Activated T-helper 2 cell treated with anti-CD3 and anti-CD28 coated beads, Interferon-gamma antibody, Interleukin-2, Interleukin-4, amounts not matched to agents 10 μg/mL and 5 μg/mL and 100 μg/mL, durations not matched to agents 14 hours and 24 hours and 36 hours (primary cell): ENCODE measurements at regions of chr19 and their contacts with region 1.

Region 1: DNA sequence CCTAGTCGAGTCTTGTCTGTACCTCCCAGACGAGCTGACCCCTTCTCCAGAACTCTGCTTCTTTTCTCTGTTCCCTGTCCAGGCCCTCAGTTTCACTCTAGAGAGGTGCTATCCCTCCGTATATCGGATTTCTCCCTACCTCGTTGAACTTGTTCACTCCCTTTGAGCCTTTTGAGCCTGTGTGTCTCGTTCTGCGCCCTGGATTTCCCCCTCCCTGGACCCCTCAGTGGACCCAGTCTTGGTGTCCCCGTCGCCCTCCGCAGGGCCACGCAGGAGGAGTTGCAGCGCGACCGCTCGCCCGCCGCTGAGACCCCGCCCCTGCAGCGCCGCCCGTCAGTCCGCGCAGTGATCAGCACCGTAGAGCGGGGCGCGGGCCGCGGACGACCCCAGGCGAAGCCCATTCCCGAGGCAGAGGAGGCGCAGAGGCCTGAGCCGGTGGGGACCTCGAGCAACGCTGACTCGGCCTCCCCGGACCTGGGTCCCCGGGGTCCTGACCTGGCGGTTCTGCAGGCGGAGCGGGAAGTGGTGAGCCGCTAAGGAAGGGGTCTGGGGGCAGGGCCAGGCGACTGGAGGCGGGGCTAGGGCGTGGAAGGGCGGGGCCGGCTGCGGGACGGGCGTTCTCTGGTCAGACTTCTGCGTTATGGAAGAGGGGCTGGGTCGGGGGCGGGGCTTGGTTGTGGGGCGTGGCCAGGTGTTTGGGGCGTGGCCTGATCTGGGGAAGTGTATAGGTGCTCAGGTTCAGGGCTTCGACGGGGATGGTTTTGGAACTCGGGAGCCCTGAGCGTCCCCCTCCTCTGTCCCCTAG is 5.5 kb downstream of the EPS8L1 start:
- DNase-seq: peak; percentile 94
- H3K4me3 Mint-ChIP-seq: peak overlapping the region; percentile 79
- H3K27ac Mint-ChIP-seq: peak overlapping the region; percentile 86
- H3K4me1 Mint-ChIP-seq: peaks cover 16% of the 10 kb centered on the region
- H3K27me3 Mint-ChIP-seq: peaks cover 28% of the 10 kb centered on the region

Region 2: DNA sequence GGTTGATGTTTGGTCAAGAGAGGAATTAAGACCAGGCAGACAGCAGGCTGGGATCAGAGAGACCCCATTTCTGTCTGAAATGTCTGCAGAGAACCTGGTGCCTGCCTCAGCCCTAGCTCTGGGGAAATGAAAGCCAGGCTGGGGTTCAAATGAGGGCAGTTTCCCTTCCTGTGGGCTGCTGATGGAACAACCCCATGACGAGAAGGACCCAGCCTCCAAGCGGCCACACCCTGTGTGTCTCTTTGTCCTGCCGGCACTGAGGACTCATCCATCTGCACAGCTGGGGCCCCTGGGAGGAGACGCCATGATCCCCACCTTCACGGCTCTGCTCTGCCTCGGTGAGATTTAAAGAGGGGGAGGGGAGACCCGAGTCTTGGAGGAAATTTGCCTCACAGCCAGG is 418.4 kb before region 1 on chr19 and contains the start of gene LILRB4:
- intact Hi-C with region 1: no loop called
- DNase-seq: no peak
- H3K4me3 Mint-ChIP-seq: no peak within 1 kb of the TSS
- H3K27ac Mint-ChIP-seq: no peak within 1 kb of the TSS
- H3K4me1 Mint-ChIP-seq: no peaks in the 10 kb centered on the region
- H3K27me3 Mint-ChIP-seq: no peaks in the 10 kb centered on the region
- total RNA-seq, gene LILRB4: 0.32 and 0.46 TPM in 2 replicates

Region 3: DNA sequence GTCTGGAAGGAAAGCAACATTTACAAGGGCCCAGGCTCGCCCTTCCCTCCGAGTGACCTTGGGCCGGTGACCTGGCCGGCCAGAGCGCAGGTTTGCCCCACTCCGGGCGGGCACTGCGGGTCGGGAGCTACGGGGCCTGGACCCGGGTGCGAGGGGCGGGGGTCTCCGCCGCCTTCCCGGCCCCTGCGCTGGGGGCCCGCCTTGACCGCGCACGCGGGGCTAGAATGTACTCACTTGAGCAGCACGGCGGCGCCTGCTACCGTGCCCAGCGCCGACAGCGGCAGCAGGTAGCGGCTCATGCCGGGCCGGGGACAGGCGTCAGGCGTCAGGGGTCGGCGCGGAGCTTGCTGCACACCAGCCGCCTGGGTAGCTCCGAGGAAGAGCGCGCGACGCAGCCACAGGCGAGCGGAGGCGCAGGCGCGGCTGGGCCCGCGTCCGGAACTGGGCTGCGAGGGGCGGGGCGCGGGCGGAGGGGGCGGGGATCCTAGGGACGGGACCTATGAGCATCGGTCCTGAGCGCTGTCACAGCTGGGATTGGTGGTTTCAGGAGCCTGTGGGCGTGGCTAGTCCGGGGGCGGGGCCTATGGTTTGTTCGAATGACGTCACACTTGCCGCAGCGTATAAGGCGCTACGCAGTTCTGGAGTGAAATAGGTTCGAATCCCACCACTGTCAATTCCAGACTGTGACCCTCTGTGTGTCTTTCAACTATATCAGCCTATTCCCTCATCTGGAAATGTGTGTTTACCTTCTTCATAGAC is 18.3 kb before region 1 on chr19 and contains the start of gene RDH13:
- intact Hi-C with region 1: loop called (anchors 2 kb)
- DNase-seq: peak; percentile 96
- H3K4me3 Mint-ChIP-seq: peak within 1 kb of the TSS; percentile 91
- H3K27ac Mint-ChIP-seq: peak within 1 kb of the TSS; percentile 71
- H3K4me1 Mint-ChIP-seq: peaks cover 4% of the 10 kb centered on the region
- H3K27me3 Mint-ChIP-seq: peaks cover 24% of the 10 kb centered on the region
- total RNA-seq, gene RDH13: 18.3 and 18.9 TPM in 2 replicates

Region 4: GRCh38 chr19:55117636-55118391 is 36.6 kb after region 1 on chr19 and contains the start of gene PPP1R12C:
- intact Hi-C with region 1: loop called (anchors 2 kb)
- DNase-seq: peak; percentile 96
- H3K4me3 Mint-ChIP-seq: peak within 1 kb of the TSS; percentile 100
- H3K27ac Mint-ChIP-seq: peak within 1 kb of the TSS; percentile 93
- H3K4me1 Mint-ChIP-seq: peaks cover 29% of the 10 kb centered on the region
- H3K27me3 Mint-ChIP-seq: peaks cover 6% of the 10 kb centered on the region
- total RNA-seq, gene PPP1R12C: 104 and 108 TPM in 2 replicates